HCT116 (cell line): ENCODE measurements at regions of chr6 and their contacts with region 1.

Region 1: DNA sequence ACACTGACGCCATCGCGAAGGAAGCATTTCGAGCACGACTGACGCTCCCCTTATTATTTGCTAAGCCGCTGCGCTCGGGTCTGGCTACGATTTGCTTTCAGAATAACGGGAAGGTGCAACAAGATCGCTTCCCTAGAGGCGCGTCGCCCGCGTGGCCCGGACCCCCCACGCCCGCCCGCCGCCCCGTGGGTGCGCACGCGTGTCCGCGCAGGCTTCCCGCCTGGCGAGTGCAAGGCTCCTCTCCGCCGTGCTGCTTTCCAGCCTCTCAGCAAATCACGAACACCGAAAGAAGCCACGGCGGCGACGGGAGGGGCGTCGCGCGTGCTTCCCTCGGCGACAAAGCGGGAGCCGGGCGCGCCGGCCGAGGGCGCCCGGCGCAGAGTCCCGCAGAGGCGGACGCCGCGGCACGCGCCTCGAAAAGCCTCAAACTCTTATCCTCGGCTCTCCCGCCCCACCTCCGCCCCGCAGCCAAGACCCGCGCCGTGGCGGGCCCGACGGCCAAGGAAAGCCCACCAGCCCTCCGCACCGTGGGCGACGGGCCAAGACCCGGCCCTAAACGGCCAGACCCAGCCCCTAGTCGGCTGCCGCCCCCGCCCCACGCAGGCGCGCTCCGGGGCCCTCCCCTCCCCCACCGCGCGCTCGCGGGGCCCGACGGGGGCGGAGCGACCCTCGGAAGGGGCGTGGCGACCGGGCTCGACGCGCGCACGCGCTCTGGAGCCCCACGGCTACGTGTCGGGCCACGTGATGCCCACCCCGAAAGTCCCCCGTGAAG is 987 bp upstream of the QKI start:
- DNase-seq: peak; percentile 29
- ATAC-seq: peak; percentile 64
- H3K4me3 ChIP-seq: no peak overlapping the region; a peak in 1 of 4 replicates
- H3K27ac ChIP-seq: peak overlapping the region; percentile 24; the same call in 1 of the 2 replicates
- H3K4me1 ChIP-seq: peaks cover 3 to 4% of the 10 kb centered on the region in 2 experiments
- H3K27me3 ChIP-seq: no peaks in the 10 kb centered on the region
- CTCF ChIP-seq: no peak
- POLR2A ChIP-seq: no peak
- RAD21 ChIP-seq: no peak

Region 2: GRCh38 chr6:163600781-163601180 is 187.2 kb after region 1 on chr6:
- CTCF ChIA-PET with region 1: no interaction called
- POLR2A ChIA-PET with region 1: no interaction called
- RAD21 ChIA-PET with region 1: no interaction called
- intact Hi-C with region 1: no loop called
- DNase-seq: no peak
- ATAC-seq: no peak
- H3K4me3 ChIP-seq: no peak overlapping the region
- H3K27ac ChIP-seq: no peak overlapping the region
- H3K4me1 ChIP-seq: no peaks in the 10 kb centered on the region
- H3K27me3 ChIP-seq: no peaks in the 10 kb centered on the region
- CTCF ChIP-seq: no peak
- POLR2A ChIP-seq: no peak
- RAD21 ChIP-seq: no peak

Region 3: DNA sequence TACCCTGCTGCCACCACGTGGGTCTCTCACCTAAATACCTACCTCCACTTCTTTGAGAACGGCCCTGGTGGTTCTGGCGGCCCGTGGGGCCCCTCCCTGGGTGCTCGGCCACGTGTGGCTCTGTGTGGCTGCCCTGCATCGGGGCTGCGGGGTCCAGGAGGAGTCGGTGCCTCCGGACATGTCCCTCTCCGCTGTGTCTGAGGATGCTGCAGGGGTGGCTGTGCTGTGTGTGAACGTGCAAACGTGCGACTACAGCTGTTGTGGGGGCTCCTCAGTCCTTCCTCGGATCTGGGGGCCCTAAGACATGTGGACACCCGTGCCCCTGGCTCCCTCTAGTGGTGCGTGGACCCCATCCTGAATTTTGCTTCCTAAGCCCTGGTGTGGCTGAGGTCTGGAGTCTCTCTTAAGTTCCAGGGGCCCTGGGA is 692.8 kb after region 1 on chr6:
- CTCF ChIA-PET with region 1: no interaction called
- POLR2A ChIA-PET with region 1: no interaction called
- RAD21 ChIA-PET with region 1: no interaction called
- intact Hi-C with region 1: loop called (anchors 5 kb)
- DNase-seq: no peak
- ATAC-seq: peak; percentile 69
- H3K4me3 ChIP-seq: no peak overlapping the region
- H3K27ac ChIP-seq: no peak overlapping the region
- H3K4me1 ChIP-seq: no peaks in the 10 kb centered on the region; a peak in 1 of 4 replicates
- H3K27me3 ChIP-seq: no peaks in the 10 kb centered on the region
- CTCF ChIP-seq: peak; percentile 8 to 43 (median 40); a peak in 4 of 6 replicates
- POLR2A ChIP-seq: no peak
- RAD21 ChIP-seq: peak; percentile 43; the same call in 1 of the 2 replicates